Aorta (tissue), 5 donors: ENCODE measurements at regions of chr9 and their contacts with region 1.

Region 1: DNA sequence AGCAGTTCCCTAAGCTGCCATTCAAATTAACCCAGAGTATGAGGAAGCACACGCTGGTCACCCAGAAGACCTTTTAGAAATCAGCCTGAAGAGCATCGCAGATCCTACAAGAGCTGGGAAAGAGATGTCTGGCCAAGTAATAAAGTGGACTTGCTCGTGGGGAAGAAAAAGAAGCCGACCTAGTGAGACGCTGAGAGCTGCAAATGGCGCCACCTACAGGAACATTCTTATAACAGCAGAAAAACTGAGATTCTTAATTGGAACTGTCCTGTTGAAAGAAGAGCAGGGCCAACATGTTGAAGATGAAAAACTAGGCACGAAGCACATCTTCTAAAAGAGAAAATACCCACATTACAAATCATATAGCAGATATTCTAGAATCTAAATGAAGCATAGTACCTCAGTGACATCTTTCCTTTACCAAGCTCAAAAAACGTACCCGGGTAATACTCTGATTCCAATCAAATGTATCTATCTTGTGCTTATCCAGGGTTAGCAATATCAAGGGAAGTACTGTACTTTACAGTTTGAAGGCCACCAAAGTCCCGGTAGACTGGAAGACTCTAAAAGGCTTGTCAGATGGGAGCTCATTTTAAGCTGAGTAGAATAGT is 3.9 kb upstream of the GNAQ start:
- DNase-seq: peak in 1 of 2 donors; percentile 58
- ATAC-seq: peak; percentile 64
- H3K4me3 ChIP-seq: no peak overlapping the region
- H3K27ac ChIP-seq: peak overlapping the region in 1 of 2 donors; percentile 37
- H3K4me1 ChIP-seq: peaks cover 0 to 2% of the 10 kb centered on the region in 2 donors
- H3K27me3 ChIP-seq: no peaks in the 10 kb centered on the region

Region 2: DNA sequence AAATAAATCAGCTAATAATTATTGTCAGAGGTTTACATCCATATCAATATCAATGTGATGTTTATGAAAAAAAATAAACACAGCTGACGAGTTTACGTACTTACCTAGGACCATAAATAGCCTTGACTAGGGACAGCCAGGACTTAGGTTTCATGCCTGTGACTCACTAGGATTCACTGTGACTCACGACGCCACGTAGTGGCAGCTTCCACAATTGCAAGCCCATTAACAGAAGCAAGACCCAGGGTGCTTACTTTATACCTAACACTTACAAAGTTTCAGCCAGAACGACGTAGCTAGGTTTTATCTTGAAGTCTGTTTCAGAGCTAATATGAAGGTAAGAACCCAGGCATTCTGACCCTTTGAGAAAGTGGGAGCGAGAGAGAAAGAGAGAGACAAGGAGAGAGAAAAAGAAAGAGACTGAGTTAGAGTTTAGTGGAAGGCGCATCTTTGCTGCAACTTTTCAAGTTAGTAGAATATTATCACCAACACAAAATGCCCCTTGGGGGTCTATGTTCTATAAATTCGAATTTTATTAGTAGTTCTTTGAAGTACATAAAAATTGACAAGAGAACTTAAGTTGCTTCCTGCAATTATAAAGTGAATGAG is 578.6 kb before region 1 on chr9:
- intact Hi-C with region 1: loop called (anchors 5 to 10 kb)
- DNase-seq: peak; percentile 87 to 92
- ATAC-seq: peak; percentile 91
- H3K4me3 ChIP-seq: no peak overlapping the region
- H3K27ac ChIP-seq: no peak overlapping the region
- H3K4me1 ChIP-seq: no peaks in the 10 kb centered on the region
- H3K27me3 ChIP-seq: no peaks in the 10 kb centered on the region

Region 3: GRCh38 chr9:77751341-77752091 is 284.0 kb before region 1 on chr9:
- intact Hi-C with region 1: loop called in 1 of 2 experiments (anchors 5 kb)
- DNase-seq: no peak
- ATAC-seq: peak; percentile 81
- H3K4me3 ChIP-seq: no peak overlapping the region
- H3K27ac ChIP-seq: peak overlapping the region in 1 of 2 donors; percentile 43
- H3K4me1 ChIP-seq: no peaks in the 10 kb centered on the region
- H3K27me3 ChIP-seq: no peaks in the 10 kb centered on the region

Region 4: DNA sequence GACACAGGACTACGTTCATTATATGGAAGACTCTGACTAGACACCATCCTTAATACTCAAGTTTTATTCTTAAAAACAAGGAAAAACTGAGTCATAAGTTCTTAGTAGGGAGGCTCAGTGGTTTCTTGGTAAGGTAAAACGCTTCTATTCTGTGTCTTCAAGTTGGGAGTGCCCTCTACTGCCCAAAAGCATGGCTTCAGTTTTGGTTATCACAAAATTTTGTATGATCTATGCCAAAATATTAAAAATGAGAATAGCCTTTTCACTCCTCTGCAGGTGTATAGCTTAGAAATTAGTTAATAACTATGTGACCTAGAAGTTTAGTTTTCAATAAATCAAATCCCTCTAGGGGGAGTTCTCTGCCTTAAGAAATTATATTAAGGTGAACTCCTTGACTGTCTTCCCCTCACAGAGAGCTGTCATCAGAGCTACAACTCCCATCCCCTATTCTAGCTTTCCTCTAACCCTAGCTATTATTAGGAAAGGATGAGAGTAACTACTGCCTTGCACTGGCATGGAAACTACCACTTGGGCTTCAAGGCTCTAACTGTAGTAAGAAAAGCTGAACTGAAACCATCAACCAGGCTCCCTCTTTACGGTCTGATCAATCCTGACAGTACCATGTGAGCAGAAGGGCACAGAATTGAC is 193.6 kb before region 1 on chr9:
- intact Hi-C with region 1: loop called in 1 of 2 experiments (anchors 10 kb)
- DNase-seq: no peak
- ATAC-seq: no peak
- H3K4me3 ChIP-seq: no peak overlapping the region
- H3K27ac ChIP-seq: no peak overlapping the region
- H3K4me1 ChIP-seq: peaks cover 3 to 8% of the 10 kb centered on the region in 2 donors
- H3K27me3 ChIP-seq: no peaks in the 10 kb centered on the region

Region 5: GRCh38 chr9:77944556-77945243 is 90.8 kb before region 1 on chr9:
- intact Hi-C with region 1: loop called in 1 of 2 experiments (anchors 5 kb)
- DNase-seq: no peak
- ATAC-seq: peak; percentile 72
- H3K4me3 ChIP-seq: no peak overlapping the region
- H3K27ac ChIP-seq: peak overlapping the region; percentile 79 to 94
- H3K4me1 ChIP-seq: peaks cover 10 to 23% of the 10 kb centered on the region in 2 donors
- H3K27me3 ChIP-seq: no peaks in the 10 kb centered on the region

Region 6: GRCh38 chr9:78221425-78221824 is 185.9 kb after region 1 on chr9:
- intact Hi-C with region 1: no loop called
- DNase-seq: no peak
- ATAC-seq: no peak
- H3K4me3 ChIP-seq: no peak overlapping the region
- H3K27ac ChIP-seq: no peak overlapping the region
- H3K4me1 ChIP-seq: no peaks in the 10 kb centered on the region
- H3K27me3 ChIP-seq: no peaks in the 10 kb centered on the region